ENCODE measurements at regions of chr1 and their contacts with region 1.

Region 1: DNA sequence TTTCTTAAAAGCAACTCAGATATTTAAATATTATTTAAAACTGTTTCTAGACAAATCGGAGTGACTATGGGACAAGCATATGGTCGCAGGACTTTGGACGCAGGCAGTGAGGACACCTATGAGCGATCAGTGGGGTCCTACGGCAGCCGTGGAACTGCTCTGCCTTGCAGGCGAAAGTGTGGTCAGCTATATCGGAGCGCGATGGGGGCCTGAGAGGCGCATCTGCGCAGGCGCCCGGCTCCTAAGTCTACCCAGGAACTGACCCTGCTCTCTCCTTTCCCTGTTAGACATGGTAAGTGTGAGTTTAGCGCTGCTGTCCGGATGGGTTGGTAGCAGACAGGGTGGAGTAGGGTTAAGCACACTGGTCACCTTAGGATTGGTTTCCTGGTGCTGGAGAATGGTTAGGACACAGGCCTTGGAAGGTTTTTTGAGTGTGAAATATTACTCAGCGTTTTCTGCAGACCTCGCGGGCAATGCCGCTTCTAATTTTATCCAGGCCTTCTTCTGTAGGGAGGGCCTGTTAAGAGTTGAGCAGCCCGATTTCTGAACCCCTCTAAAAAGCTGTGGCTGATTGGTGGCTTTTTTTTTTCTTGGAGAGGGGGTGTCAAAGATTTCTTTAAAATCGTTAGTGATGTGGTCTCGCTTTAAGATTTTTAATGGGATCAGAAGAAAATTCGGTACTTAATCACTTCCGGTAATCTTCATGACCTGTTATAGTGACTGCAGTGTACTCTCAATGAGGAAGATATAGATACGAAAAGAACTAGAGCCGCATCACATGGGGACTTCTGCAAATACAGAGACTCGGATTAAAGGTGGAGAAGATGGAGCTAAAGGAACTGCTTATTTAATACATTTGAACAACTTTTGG is at the start of gene RABGGTB:
- DNase-seq: peak; percentile 97
- H3K4me3 ChIP-seq: peak within 1 kb of the TSS; percentile 67
- H3K27ac ChIP-seq: peak within 1 kb of the TSS; percentile 86
- H3K4me1 ChIP-seq: peaks cover 16% of the 10 kb centered on the region
- H3K27me3 ChIP-seq: no peaks in the 10 kb centered on the region
- CTCF ChIP-seq: no peak
- total RNA-seq, gene RABGGTB: 140 and 171 TPM in 2 replicates

Region 2: DNA sequence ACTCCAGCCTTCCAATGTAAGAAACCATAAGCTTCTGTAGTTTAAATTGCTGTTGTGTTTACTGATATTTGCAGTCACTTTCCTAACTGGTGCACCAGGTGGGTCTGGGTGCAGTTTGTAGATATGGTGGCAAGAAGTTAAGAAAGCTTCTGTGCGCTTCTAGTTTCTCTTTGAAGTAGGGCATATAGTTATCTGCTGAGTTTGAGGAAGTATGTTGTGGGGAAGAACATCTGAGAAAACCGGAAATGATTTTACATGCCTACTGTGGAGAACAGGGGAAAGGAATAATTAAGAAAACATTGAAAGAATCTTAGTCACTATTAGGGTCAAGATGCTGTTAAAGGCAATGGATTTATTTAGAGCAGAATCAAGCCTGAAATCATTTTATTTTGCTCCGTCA is 160.4 kb before region 1 on chr1:
- CTCF ChIA-PET with region 1: no interaction called
- POLR2A ChIA-PET with region 1: no interaction called
- intact Hi-C with region 1: loop called (anchors 5 kb)
- DNase-seq: peak; percentile 68
- H3K4me3 ChIP-seq: no peak overlapping the region
- H3K27ac ChIP-seq: no peak overlapping the region
- H3K4me1 ChIP-seq: peaks cover 21% of the 10 kb centered on the region
- H3K27me3 ChIP-seq: no peaks in the 10 kb centered on the region
- CTCF ChIP-seq: no peak

Region 3: GRCh38 chr1:75724472-75725022 is 61.7 kb before region 1 on chr1 and contains the start of gene ACADM:
- CTCF ChIA-PET with region 1: no interaction called
- POLR2A ChIA-PET with region 1: no interaction called
- intact Hi-C with region 1: loop called (anchors 2 kb)
- DNase-seq: peak; percentile 90
- H3K4me3 ChIP-seq: peak within 1 kb of the TSS; percentile 96
- H3K27ac ChIP-seq: peak within 1 kb of the TSS; percentile 77
- H3K4me1 ChIP-seq: peaks cover 16% of the 10 kb centered on the region
- H3K27me3 ChIP-seq: no peaks in the 10 kb centered on the region
- CTCF ChIP-seq: no peak
- total RNA-seq, gene ACADM: 35.6 and 37.3 TPM in 2 replicates